T-cell (primary cell): ENCODE measurements at regions of chr14 and their contacts with region 1.

Region 1: DNA sequence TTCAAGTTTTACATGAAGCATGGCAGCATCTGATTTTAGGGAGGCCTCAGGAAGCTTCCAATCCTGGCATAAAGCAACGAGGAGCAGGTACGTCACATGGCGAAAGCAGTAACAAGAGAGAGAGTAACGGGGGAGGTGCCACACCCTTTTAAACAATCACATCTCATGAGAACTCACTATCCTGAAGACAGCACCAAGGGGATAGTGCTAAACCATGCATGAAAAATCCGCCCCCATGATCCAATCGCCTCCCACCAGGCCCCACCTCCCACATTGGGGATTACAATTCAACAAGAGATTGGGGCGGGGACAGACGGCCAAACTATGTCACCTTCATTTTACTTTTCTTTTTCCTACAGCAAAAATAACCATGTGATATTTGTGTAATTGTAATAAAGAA is 7.2 kb upstream of the MAP3K9 start:
- DNase-seq: no peak
- ATAC-seq: no peak
- H3K4me3 ChIP-seq: no peak overlapping the region
- H3K4me3 Mint-ChIP-seq: no peak overlapping the region
- H3K27ac ChIP-seq: no peak overlapping the region
- H3K27ac Mint-ChIP-seq: no peak overlapping the region
- H3K4me1 ChIP-seq: peaks cover 2 to 12% of the 10 kb centered on the region in 2 experiments
- H3K4me1 Mint-ChIP-seq: peaks cover 8 to 11% (median 11%) of the 10 kb centered on the region in 3 donors
- H3K27me3 ChIP-seq: peaks cover 2 to 8% of the 10 kb centered on the region in 2 experiments
- H3K27me3 Mint-ChIP-seq: peaks cover 9 to 13% of the 10 kb centered on the region in 2 donors

Region 2: DNA sequence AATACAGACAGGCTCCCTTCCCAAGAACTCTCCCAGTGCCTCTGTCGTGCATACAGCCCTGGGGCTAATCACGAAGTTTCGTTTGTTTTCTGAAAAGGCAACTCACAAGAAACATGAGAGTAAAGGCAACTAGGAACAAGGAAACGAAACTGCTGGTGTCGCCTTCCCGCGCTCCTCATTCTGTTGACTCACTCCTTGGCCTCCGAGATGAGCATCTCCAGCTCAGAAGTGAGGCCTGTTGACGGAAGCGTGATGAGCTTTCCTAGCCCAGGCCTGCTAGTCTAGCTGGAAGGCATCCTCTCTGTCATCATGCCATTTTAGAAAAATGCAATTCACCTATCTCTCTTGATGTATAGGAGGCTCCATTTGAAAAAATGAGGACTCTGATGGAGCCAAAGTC is 124.3 kb before region 1 on chr14:
- CTCF ChIA-PET with region 1: no interaction called
- POLR2A ChIA-PET with region 1: no interaction called
- DNase-seq: no peak
- ATAC-seq: no peak
- H3K4me3 ChIP-seq: no peak overlapping the region
- H3K4me3 Mint-ChIP-seq: no peak overlapping the region
- H3K27ac ChIP-seq: no peak overlapping the region
- H3K27ac Mint-ChIP-seq: no peak overlapping the region
- H3K4me1 ChIP-seq: no peaks in the 10 kb centered on the region
- H3K4me1 Mint-ChIP-seq: no peaks in the 10 kb centered on the region
- H3K27me3 ChIP-seq: no peaks in the 10 kb centered on the region
- H3K27me3 Mint-ChIP-seq: no peaks in the 10 kb centered on the region

Region 3: DNA sequence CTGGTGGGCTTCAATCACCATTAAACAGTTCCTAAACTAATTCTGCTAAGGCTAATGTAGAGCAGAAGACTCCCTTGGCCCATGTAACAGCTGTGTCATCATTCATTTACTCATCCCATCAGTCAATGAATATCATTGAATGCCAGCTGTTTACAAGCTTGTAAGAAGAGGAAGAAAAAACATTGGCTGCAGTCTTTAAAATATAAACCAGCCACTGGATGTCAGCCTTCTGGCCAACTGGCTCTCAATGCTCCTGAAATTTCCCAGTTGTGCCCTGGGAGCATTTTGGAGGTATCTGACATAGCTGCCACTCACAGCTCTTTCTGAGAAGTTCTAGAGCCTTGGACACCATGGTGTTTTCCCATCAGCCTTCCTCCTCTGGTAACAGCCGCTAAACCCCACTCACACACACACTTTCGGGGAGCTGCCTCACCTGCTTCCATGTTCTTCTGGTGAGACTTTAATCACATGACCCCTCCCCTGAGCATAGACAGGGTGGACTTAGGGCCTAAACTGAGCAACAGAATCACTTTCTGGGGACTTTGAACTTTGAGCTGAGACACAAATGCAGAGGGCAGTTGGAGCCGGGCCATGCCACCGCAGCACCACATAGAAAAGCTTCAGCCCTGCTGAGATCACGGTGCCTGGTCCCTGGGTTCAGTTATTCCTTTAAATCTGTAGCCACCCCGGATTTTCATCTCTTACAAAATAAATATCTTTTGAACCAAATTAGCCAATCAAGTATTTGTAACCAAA is 11.0 kb after region 1 on chr14:
- CTCF ChIA-PET with region 1: interaction called, 4 to 20 read pairs
- POLR2A ChIA-PET with region 1: interaction called in 1 of 2 experiments, 4 read pairs
- DNase-seq: no peak
- ATAC-seq: no peak
- H3K4me3 ChIP-seq: no peak overlapping the region
- H3K4me3 Mint-ChIP-seq: no peak overlapping the region
- H3K27ac ChIP-seq: no peak overlapping the region
- H3K27ac Mint-ChIP-seq: no peak overlapping the region
- H3K4me1 ChIP-seq: peaks cover 0 to 5% of the 10 kb centered on the region in 2 experiments
- H3K4me1 Mint-ChIP-seq: peaks cover 5 to 7% (median 6%) of the 10 kb centered on the region in 3 donors
- H3K27me3 ChIP-seq: peaks cover 0 to 5% of the 10 kb centered on the region in 2 experiments
- H3K27me3 Mint-ChIP-seq: peaks cover 6 to 9% of the 10 kb centered on the region in 2 donors